HCT116 (cell line): ENCODE measurements at regions of chr9 and their contacts with region 1.

Region 1: GRCh38 chr9:129641746-129642513 is at the start of gene ASB6:
- DNase-seq: peak; percentile 92
- ATAC-seq: peak; percentile 98
- H3K4me3 ChIP-seq: peak within 1 kb of the TSS; percentile 85 to 95
- H3K27ac ChIP-seq: peak within 1 kb of the TSS; percentile 74
- H3K4me1 ChIP-seq: peaks cover 10 to 17% of the 10 kb centered on the region in 2 experiments; a peak in 3 of 4 replicates
- H3K27me3 ChIP-seq: no peaks in the 10 kb centered on the region
- CTCF ChIP-seq: peak in 2 of 3 experiments; percentile 88 to 90; a peak in 4 of 6 replicates
- POLR2A ChIP-seq: peak; percentile 26
- RAD21 ChIP-seq: no peak
- total RNA-seq, gene ASB6: 21.6 TPM

Region 2: GRCh38 chr9:128656416-128657343 is 985.2 kb before region 1 on chr9 and contains the start of gene DYNC2I2:
- CTCF ChIA-PET with region 1: no interaction called
- POLR2A ChIA-PET with region 1: no interaction called
- RAD21 ChIA-PET with region 1: no interaction called
- intact Hi-C with region 1: no loop called
- DNase-seq: peak; percentile 89
- ATAC-seq: peak; percentile 88
- H3K4me3 ChIP-seq: peak within 1 kb of the TSS; percentile 75 to 83
- H3K27ac ChIP-seq: peak within 1 kb of the TSS; percentile 90
- H3K4me1 ChIP-seq: peaks cover 6 to 35% of the 10 kb centered on the region in 2 experiments
- H3K27me3 ChIP-seq: no peaks in the 10 kb centered on the region
- CTCF ChIP-seq: no peak
- POLR2A ChIP-seq: peak; percentile 70
- RAD21 ChIP-seq: no peak
- total RNA-seq, gene DYNC2I2: 155 TPM

Region 3: GRCh38 chr9:129495534-129496325 is 146.2 kb before region 1 on chr9:
- CTCF ChIA-PET with region 1: no interaction called
- POLR2A ChIA-PET with region 1: no interaction called
- RAD21 ChIA-PET with region 1: no interaction called
- intact Hi-C with region 1: no loop called
- DNase-seq: peak; percentile 82
- ATAC-seq: peak; percentile 71
- H3K4me3 ChIP-seq: peak overlapping the region; percentile 62 to 67
- H3K27ac ChIP-seq: peak overlapping the region; percentile 100
- H3K4me1 ChIP-seq: peaks cover 74 to 100% of the 10 kb centered on the region in 2 experiments
- H3K27me3 ChIP-seq: no peaks in the 10 kb centered on the region
- CTCF ChIP-seq: no peak
- POLR2A ChIP-seq: no peak
- RAD21 ChIP-seq: no peak

Region 4: DNA sequence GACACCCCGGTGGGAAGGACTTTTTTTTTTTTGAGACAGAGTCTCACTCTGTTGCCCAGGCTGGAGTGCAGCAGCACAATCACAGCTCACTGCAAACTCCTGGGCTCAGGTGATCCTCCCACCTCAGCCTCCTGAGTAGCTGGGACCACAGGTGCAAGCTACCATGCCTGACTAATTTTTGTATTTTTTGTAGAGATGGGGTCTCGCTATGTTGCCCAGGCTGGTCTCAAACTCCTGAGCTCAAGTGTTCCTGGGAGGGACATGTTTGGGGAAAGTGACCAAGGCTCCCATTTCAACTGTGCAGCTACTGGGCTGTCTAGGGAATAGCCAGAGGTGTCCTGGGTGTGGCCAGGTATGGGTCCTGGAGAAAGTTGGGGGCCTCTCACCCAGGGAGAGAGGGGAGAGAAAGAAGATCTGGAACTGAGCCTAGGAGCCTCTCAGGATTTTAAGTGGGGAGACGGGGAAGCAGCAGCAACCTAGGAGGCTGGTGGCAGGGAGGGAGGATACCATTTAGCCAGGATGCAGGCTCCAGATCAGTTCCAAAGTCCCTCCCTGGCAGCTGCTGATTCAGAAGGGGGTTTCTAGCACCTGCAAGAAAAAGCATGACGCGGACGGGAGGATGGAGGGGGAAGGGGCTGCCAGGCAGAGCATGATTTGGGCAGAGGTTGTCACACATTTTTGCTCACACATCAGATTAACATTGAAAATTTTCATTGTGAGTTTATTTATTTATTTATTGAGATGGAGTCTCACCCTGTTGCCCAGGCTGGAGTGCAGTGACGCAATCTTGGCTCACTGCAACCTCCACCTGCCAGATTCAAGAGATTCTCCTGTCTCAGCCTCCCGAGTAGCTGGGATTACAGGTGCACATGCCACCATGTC is 154.3 kb after region 1 on chr9:
- CTCF ChIA-PET with region 1: interaction called, 18 read pairs
- POLR2A ChIA-PET with region 1: no interaction called
- RAD21 ChIA-PET with region 1: no interaction called
- intact Hi-C with region 1: no loop called
- DNase-seq: no peak
- ATAC-seq: no peak
- H3K4me3 ChIP-seq: no peak overlapping the region
- H3K27ac ChIP-seq: no peak overlapping the region
- H3K4me1 ChIP-seq: no peaks in the 10 kb centered on the region; a peak in 1 of 4 replicates
- H3K27me3 ChIP-seq: peaks cover 4% of the 10 kb centered on the region; the same call in 1 of the 2 replicates
- CTCF ChIP-seq: no peak
- POLR2A ChIP-seq: no peak
- RAD21 ChIP-seq: no peak

Region 5: GRCh38 chr9:129888293-129889121 is 246.6 kb after region 1 on chr9:
- CTCF ChIA-PET with region 1: no interaction called
- POLR2A ChIA-PET with region 1: no interaction called
- RAD21 ChIA-PET with region 1: no interaction called
- intact Hi-C with region 1: no loop called
- DNase-seq: no peak
- ATAC-seq: no peak
- H3K4me3 ChIP-seq: no peak overlapping the region
- H3K27ac ChIP-seq: no peak overlapping the region
- H3K4me1 ChIP-seq: peaks cover 22 to 31% of the 10 kb centered on the region in 2 experiments
- H3K27me3 ChIP-seq: no peaks in the 10 kb centered on the region
- CTCF ChIP-seq: no peak
- POLR2A ChIP-seq: no peak
- RAD21 ChIP-seq: no peak

Region 6: GRCh38 chr9:130484362-130485072 is 842.6 kb after region 1 on chr9:
- CTCF ChIA-PET with region 1: no interaction called
- POLR2A ChIA-PET with region 1: no interaction called
- RAD21 ChIA-PET with region 1: no interaction called
- intact Hi-C with region 1: no loop called
- DNase-seq: no peak
- ATAC-seq: no peak
- H3K4me3 ChIP-seq: no peak overlapping the region
- H3K27ac ChIP-seq: no peak overlapping the region
- H3K4me1 ChIP-seq: no peaks in the 10 kb centered on the region
- H3K27me3 ChIP-seq: no peaks in the 10 kb centered on the region
- CTCF ChIP-seq: no peak
- POLR2A ChIP-seq: no peak
- RAD21 ChIP-seq: no peak